CD8-positive, alpha-beta memory T cell (primary cell): ENCODE measurements at regions of chr7 and their contacts with region 1.

Region 1: GRCh38 chr7:101363734-101364374 is 1.2 kb downstream of the COL26A1 start:
- DNase-seq: peak; percentile 36 to 70 (median 51)
- H3K4me3 ChIP-seq: peak overlapping the region; percentile 45
- H3K4me3 Mint-ChIP-seq: peak overlapping the region in 6 of 7 donors; percentile 41 to 79 (median 54)
- H3K27ac ChIP-seq: no peak overlapping the region
- H3K27ac Mint-ChIP-seq: no peak overlapping the region
- H3K4me1 ChIP-seq: no peaks in the 10 kb centered on the region
- H3K4me1 Mint-ChIP-seq: peaks cover 0 to 5% (median 3%) of the 10 kb centered on the region in 3 donors
- H3K27me3 ChIP-seq: peaks cover 15% of the 10 kb centered on the region
- H3K27me3 Mint-ChIP-seq: peaks cover 29 to 46% of the 10 kb centered on the region in 2 donors

Region 2: GRCh38 chr7:101173752-101174244 is 190.1 kb before region 1 on chr7:
- CTCF ChIA-PET with region 1: no interaction called
- POLR2A ChIA-PET with region 1: no interaction called
- DNase-seq: peak; percentile 37 to 71 (median 60)
- H3K4me3 ChIP-seq: no peak overlapping the region
- H3K4me3 Mint-ChIP-seq: peak overlapping the region in 6 of 7 donors; percentile 63 to 86 (median 72)
- H3K27ac ChIP-seq: no peak overlapping the region
- H3K27ac Mint-ChIP-seq: peak overlapping the region in 2 of 8 donors; percentile 24 to 42
- H3K4me1 ChIP-seq: peaks cover 57% of the 10 kb centered on the region
- H3K4me1 Mint-ChIP-seq: peaks cover 34 to 53% (median 37%) of the 10 kb centered on the region in 3 donors
- H3K27me3 ChIP-seq: peaks cover 93% of the 10 kb centered on the region
- H3K27me3 Mint-ChIP-seq: peaks cover 84 to 88% of the 10 kb centered on the region in 2 donors

Region 3: DNA sequence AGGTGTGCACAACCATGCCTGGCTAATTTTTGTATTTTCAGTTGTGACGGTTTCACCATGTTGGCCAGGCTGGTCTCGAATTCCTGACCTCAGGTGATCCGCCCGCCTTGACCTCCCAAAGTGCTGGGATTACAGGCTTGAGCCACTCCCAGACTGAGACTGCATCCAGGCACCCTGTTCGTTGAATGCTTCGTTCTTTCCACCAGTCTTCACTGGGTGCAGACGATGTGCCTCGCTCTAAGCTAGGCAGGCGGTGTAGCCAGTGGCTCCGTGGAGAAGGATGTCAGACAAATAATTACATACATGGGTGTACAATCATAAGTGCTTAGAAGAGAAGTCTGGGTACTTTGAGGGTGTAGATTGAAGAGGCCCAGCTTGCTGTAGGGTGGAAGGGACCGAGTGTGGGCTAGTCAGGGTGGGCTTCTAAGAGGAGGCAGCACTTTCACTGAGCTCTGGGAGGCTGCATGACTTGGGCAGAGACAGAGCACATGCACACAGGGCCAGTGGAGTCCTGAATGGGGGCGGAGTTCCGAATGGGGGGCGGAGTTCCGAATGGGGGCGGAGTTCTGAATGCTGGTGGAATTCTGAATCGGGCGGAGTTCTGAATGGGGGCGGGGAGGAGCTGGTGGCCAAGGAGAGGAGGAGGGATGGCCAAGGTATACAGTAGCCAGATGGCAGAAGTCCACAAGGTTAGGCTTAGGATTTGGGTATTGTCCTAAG is 73.2 kb after region 1 on chr7:
- CTCF ChIA-PET with region 1: interaction called, 10 read pairs
- POLR2A ChIA-PET with region 1: no interaction called
- DNase-seq: no peak
- H3K4me3 ChIP-seq: no peak overlapping the region
- H3K4me3 Mint-ChIP-seq: no peak overlapping the region
- H3K27ac ChIP-seq: no peak overlapping the region
- H3K27ac Mint-ChIP-seq: no peak overlapping the region
- H3K4me1 ChIP-seq: no peaks in the 10 kb centered on the region
- H3K4me1 Mint-ChIP-seq: no peaks in the 10 kb centered on the region
- H3K27me3 ChIP-seq: no peaks in the 10 kb centered on the region
- H3K27me3 Mint-ChIP-seq: peaks cover 13 to 37% of the 10 kb centered on the region in 2 donors